HepG2 (cell line): ENCODE measurements at regions of chr3 and their contacts with region 1.

Region 1: GRCh38 chr3:197372047-197372666 is 73.7 kb upstream of the DLG1 start:
- DNase-seq: peak; percentile 66
- ATAC-seq: no peak
- H3K4me3 ChIP-seq: peak overlapping the region in 1 of 3 experiments; percentile 6; a peak in 1 of 6 replicates
- H3K27ac ChIP-seq: peak overlapping the region; percentile 90
- H3K4me1 ChIP-seq: peaks cover 65% of the 10 kb centered on the region
- H3K27me3 ChIP-seq: no peaks in the 10 kb centered on the region
- CTCF ChIP-seq: no peak
- EP300 ChIP-seq: peak in 1 of 2 experiments; percentile 66; a peak in 2 of 4 replicates
- POLR2A ChIP-seq: no peak
- RAD21 ChIP-seq: no peak

Region 2: DNA sequence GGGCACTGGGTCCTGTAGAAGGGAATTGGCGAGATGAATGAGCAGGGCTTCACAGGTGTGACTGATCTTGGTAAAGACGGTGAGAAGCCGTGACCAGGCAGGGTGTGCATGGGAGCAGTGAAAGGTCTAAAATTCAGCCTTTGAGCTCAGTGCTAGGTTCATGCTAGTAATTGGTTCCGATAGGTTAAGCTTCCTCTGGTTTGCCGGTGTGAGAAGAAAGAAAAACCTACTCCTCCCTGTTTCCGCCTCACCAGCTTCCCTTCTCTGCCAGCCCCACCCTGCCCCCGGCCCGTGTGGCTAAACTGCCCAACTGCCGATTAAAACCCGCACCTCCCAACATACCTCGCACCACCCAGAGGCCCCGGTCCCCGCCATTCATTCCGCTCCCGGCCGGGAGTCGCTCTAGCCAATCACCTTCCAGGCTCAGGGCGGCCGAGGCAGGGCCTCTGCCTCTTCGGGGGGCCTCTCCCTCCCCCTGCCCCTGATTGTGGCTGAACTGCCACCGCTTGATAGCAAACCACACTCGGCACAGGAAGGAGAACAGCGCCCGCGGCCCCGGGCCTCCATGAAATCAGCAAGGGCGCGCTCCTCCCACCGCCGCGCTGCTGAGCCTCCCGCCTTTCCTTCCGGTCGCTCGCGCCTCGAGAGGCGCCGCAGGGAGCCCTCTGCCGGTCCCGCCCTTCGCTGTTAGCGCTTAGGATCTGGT is 740.0 kb before region 1 on chr3:
- CTCF ChIA-PET with region 1: no interaction called
- POLR2A ChIA-PET with region 1: no interaction called
- in situ Hi-C with region 1: no loop called
- intact Hi-C with region 1: no loop called
- DNase-seq: peak; percentile 54
- ATAC-seq: peak; percentile 88
- H3K4me3 ChIP-seq: peak overlapping the region; percentile 59 to 73 (median 67)
- H3K27ac ChIP-seq: peak overlapping the region; percentile 73
- H3K4me1 ChIP-seq: peaks cover 39% of the 10 kb centered on the region
- H3K27me3 ChIP-seq: peaks cover 2 to 8% of the 10 kb centered on the region in 2 experiments; a peak in 3 of 5 replicates
- CTCF ChIP-seq: peak; percentile 65
- EP300 ChIP-seq: no peak
- POLR2A ChIP-seq: peak; percentile 46 to 55
- RAD21 ChIP-seq: peak; percentile 31; the same call in 1 of the 2 replicates

Region 3: DNA sequence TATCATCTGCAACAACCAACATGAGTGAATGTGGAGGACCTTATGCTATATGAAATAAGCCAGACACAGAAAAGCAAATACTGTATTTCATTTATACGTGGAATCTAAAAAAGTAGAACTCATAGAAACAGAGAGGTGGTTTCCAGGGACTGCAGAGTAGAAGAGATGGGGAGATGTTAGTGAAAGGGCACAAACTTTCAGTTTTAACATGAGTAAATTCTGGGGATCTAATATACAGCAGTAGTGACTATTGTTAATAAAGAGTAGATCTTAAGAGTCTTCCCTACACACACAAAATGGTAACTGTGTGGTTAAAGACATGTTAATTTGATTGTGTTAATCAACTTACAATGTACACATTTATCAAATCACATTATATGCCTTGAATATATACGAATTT is 321.6 kb before region 1 on chr3:
- CTCF ChIA-PET with region 1: no interaction called
- POLR2A ChIA-PET with region 1: no interaction called
- in situ Hi-C with region 1: no loop called
- intact Hi-C with region 1: no loop called
- DNase-seq: no peak
- ATAC-seq: no peak
- H3K4me3 ChIP-seq: no peak overlapping the region
- H3K27ac ChIP-seq: no peak overlapping the region
- H3K4me1 ChIP-seq: no peaks in the 10 kb centered on the region
- H3K27me3 ChIP-seq: no peaks in the 10 kb centered on the region
- CTCF ChIP-seq: no peak
- EP300 ChIP-seq: no peak
- POLR2A ChIP-seq: no peak
- RAD21 ChIP-seq: no peak

Region 4: DNA sequence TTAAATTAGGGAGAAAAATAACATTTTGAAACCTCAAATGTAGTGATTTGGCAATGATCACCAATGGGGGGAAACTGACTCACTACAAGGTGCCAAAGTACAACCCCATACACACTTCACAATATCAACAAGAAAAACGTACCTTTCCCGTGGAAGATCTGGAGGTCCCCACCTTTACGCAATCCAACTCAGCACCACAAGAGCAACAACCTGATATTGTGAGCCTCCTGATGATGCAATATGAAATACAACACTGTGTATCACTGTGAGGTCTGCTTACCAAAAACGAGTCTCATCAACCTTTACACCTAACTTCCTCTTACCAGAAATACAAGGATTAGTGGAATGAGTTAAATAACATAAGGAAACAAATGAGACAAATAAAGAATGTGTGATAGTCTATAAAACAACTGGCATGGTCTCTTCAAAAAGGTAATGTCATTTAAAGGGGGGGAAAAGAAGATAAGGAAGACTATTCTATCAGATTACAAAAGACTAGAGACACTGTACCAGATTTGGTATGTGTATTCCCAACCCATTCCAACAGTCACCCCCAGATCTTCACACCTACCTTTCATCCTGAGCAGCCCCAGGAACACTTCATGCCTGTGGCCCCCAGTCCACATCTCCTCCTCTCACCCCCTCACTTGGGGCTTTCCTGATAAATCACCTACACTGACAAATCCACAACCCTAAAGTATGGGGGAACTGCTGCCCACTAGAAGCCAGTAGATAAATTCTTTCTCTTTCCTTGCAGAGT is 101.4 kb before region 1 on chr3:
- CTCF ChIA-PET with region 1: no interaction called
- POLR2A ChIA-PET with region 1: interaction called, 3 read pairs
- in situ Hi-C with region 1: no loop called
- intact Hi-C with region 1: loop called (anchors 1 kb)
- DNase-seq: peak; percentile 70
- ATAC-seq: peak; percentile 67
- H3K4me3 ChIP-seq: no peak overlapping the region
- H3K27ac ChIP-seq: peak overlapping the region; percentile 20
- H3K4me1 ChIP-seq: peaks cover 80% of the 10 kb centered on the region
- H3K27me3 ChIP-seq: no peaks in the 10 kb centered on the region
- CTCF ChIP-seq: no peak
- EP300 ChIP-seq: peak in 1 of 2 experiments; percentile 59; a peak in 2 of 4 replicates
- POLR2A ChIP-seq: no peak
- RAD21 ChIP-seq: no peak

Region 5: GRCh38 chr3:197317250-197317963 is 54.8 kb before region 1 on chr3:
- CTCF ChIA-PET with region 1: no interaction called
- POLR2A ChIA-PET with region 1: interaction called, 10 read pairs
- in situ Hi-C with region 1: no loop called
- intact Hi-C with region 1: loop called (anchors 5 kb)
- DNase-seq: no peak
- ATAC-seq: no peak
- H3K4me3 ChIP-seq: no peak overlapping the region
- H3K27ac ChIP-seq: no peak overlapping the region
- H3K4me1 ChIP-seq: peaks cover 20% of the 10 kb centered on the region
- H3K27me3 ChIP-seq: no peaks in the 10 kb centered on the region; a peak in 1 of 5 replicates
- CTCF ChIP-seq: no peak
- EP300 ChIP-seq: no peak
- POLR2A ChIP-seq: no peak
- RAD21 ChIP-seq: no peak

Region 6: DNA sequence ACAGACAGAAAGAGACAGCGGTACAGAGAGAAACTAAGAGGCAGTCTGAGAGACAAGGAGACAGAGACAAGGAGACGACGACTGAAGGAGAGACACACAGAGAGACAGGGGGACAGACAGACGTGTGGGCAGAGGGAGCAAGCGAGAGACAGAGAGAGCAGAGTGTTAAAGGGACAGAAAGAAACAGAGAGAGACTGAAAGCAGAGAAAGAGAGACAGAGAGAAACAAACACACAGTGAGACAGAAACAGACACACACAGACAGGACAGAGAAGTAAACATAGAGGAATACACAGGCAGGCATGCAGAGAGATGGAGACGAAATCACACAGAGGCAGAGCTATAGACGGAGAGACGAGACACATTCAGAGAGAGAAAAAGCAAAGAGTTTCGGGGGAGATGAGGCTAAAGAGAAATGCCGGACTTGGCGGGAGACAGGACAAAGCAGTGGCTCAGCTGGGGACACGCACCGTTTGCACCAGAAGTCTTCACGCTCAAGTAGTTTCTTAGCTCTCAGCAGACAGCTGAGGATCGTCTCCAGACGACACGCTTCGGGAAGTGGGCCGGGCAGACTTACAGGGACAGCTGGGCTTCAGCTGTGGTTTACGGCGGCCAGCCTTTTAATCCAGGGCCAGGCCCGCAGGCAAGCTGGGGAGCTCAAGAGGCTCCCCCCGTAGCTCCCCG is 17.7 kb before region 1 on chr3:
- CTCF ChIA-PET with region 1: no interaction called
- POLR2A ChIA-PET with region 1: interaction called, 35 read pairs
- in situ Hi-C with region 1: no loop called
- intact Hi-C with region 1: no loop called
- DNase-seq: no peak
- ATAC-seq: peak; percentile 44
- H3K4me3 ChIP-seq: no peak overlapping the region
- H3K27ac ChIP-seq: no peak overlapping the region
- H3K4me1 ChIP-seq: peaks cover 45% of the 10 kb centered on the region
- H3K27me3 ChIP-seq: no peaks in the 10 kb centered on the region
- CTCF ChIP-seq: no peak
- EP300 ChIP-seq: no peak
- POLR2A ChIP-seq: no peak
- RAD21 ChIP-seq: no peak

Region 7: DNA sequence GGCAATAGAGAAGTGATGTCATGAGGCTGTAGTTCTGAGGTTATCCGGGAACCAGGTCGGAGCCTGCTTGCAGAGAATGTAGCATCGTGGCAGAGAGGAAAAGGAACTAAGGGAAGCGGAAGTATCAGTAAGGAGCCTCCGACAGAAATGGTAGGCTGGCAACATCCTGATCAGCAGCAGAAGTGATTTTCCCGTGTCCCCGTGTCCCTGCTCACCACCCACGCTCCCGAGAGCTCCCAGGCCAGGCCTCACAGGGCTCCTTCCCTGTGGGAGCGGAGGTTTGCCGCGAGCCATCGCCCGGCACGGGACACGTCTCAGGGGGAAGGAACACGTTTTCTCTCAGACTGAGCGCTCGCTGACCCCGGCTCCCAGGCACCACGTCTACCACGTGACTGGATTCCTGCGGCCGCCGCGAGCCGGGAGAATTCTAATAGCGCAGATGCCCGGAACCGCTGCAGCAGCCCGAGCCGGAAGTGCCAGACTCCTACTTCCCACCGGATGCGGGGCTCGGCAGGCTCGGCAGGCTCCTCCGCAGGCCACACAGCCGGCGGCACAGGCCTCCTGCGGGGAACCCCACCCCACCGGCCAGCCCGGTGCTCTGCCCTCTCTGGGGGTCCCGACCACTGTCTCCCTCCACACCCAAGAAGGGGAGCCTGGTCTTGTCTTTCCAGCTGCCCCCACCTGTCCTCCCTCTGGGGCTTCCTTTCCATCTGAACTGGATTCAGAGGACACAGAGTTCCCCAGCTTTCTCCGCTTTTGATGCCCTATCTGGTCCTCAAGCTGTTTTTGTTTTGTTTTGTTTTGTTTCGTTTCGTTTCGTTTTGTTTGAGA is 84.3 kb after region 1 on chr3:
- CTCF ChIA-PET with region 1: no interaction called
- POLR2A ChIA-PET with region 1: interaction called, 22 read pairs
- in situ Hi-C with region 1: no loop called
- intact Hi-C with region 1: loop called (anchors 1 kb)
- DNase-seq: peak; percentile 69
- ATAC-seq: peak; percentile 72
- H3K4me3 ChIP-seq: peak overlapping the region; percentile 56 to 67 (median 64); a peak in 5 of 6 replicates
- H3K27ac ChIP-seq: peak overlapping the region; percentile 82
- H3K4me1 ChIP-seq: peaks cover 52% of the 10 kb centered on the region
- H3K27me3 ChIP-seq: no peaks in the 10 kb centered on the region
- CTCF ChIP-seq: no peak
- EP300 ChIP-seq: no peak
- POLR2A ChIP-seq: peak; percentile 67 to 75
- RAD21 ChIP-seq: no peak; the same call in 1 of the 2 replicates

Region 8: DNA sequence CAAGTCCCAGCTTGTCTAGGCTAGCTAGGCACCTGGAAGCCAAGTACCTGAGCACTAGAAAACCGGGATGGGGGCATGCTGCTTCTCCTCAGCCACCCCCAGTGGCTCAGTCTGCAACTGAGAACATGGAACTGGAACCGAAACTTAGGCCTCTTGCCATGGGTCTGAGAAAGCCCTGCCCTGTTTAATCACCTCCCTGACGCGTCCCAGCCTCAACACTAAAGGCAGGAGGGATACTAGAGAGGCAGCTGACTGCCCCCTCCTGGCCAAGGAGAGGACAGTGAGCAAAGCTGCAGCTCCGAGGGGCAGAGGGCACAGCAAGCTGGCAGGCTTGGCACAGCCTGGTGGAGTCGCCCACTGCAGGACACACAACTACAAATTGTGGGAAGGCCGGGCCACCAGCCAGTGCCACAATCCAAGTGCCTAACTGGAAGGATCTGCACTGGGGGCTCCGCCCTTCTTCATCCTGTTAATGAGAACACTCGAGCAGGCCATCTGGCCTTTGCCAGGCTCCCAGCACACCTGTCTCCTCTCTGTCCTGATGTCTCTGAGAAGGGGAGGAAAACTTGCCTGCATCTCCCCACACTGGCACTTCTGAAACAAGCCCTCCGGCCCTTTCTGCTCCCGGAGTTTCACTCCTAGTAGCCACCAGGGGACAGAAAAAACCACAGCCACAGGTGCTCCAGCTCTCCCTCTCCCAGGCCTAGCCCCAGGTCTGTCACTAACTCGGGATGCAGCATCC is 129.9 kb after region 1 on chr3:
- CTCF ChIA-PET with region 1: no interaction called
- POLR2A ChIA-PET with region 1: interaction called, 8 read pairs
- in situ Hi-C with region 1: no loop called
- intact Hi-C with region 1: loop called (anchors 5 kb)
- DNase-seq: peak; percentile 78
- ATAC-seq: peak; percentile 74
- H3K4me3 ChIP-seq: peak overlapping the region; percentile 50 to 71 (median 53)
- H3K27ac ChIP-seq: peak overlapping the region; percentile 28
- H3K4me1 ChIP-seq: peaks cover 52% of the 10 kb centered on the region
- H3K27me3 ChIP-seq: no peaks in the 10 kb centered on the region
- CTCF ChIP-seq: peak; percentile 95
- EP300 ChIP-seq: no peak
- POLR2A ChIP-seq: no peak
- RAD21 ChIP-seq: peak; percentile 91